Vagina (tissue), 2 donors: ENCODE measurements at regions of chr15 and their contacts with region 1.

Region 1: GRCh38 chr15:65086017-65086679 is 9.6 kb downstream of the KBTBD13 start:
- DNase-seq: no peak
- H3K4me3 ChIP-seq: no peak overlapping the region
- H3K27ac ChIP-seq: peak overlapping the region; percentile 58
- H3K4me1 ChIP-seq: peaks cover 54% of the 10 kb centered on the region
- H3K27me3 ChIP-seq: no peaks in the 10 kb centered on the region
- CTCF ChIP-seq: no peak
- POLR2A ChIP-seq: no peak

Region 2: DNA sequence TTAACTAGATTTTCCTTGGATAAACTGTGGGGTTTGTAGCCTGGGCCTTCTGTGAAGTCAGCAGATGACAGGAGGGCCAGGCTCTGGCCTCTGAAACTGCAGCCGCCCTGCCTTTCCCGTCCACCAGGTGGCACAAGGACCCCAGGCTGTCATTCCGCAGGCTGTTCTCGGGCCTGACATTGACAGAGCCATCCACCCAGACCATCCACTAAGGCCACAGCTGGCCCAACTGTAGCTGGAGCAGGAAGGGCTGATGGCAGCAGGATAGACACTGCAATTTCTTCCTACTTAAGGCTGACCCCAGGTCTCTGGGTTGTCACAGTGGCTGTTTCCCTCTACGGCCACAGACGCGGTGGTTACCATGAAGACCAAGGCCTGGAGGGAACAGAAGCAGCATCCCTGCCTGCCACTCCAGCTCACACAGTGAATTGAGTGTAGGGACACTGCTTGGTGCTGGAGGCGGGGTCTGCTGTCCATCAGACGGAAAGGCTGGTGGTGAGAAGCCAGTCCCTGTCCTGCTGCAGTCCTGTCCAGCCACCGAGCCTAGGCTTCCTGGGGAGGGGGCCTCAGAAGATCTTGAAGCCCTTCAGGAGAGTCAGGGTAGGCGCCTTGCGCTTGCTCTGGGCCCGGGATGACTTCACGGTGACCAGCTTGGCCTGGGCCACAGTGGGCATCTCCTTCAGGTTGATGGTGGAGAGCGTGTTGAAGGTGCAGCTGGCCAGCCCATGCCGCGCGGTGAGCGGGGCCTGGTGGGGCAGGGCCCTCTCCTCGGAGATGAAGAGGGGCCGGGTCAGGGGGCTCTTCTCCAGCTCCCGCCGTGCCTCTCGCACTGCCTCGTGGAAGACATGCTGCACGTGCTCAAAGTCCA is 31.6 kb before region 1 on chr15:
- intact Hi-C with region 1: loop called (anchors 5 kb)
- DNase-seq: peak in 1 of 2 donors; percentile 85
- H3K4me3 ChIP-seq: no peak overlapping the region
- H3K27ac ChIP-seq: peak overlapping the region; percentile 55
- H3K4me1 ChIP-seq: peaks cover 38% of the 10 kb centered on the region
- H3K27me3 ChIP-seq: no peaks in the 10 kb centered on the region
- CTCF ChIP-seq: peak; percentile 83 to 92 (median 85)
- POLR2A ChIP-seq: no peak